ENCODE measurements at regions of chr2 and their contacts with region 1.

Region 1: GRCh38 chr2:172710584-172711024 is 25.0 kb upstream of the RAPGEF4 start:
- DNase-seq: peak; percentile 95
- ATAC-seq: peak; percentile 95
- H3K4me3 ChIP-seq: no peak overlapping the region
- H3K27ac ChIP-seq: no peak overlapping the region
- H3K4me1 ChIP-seq: peaks cover 2% of the 10 kb centered on the region
- H3K27me3 ChIP-seq: no peaks in the 10 kb centered on the region
- CTCF ChIP-seq: peak; percentile 47
- POLR2A ChIP-seq: no peak
- RAD21 ChIP-seq: peak; percentile 70

Region 2: GRCh38 chr2:172588931-172589330 is 121.7 kb before region 1 on chr2:
- CTCF ChIA-PET with region 1: no interaction called
- POLR2A ChIA-PET with region 1: no interaction called
- dilution Hi-C with region 1: no loop called
- in situ Hi-C with region 1: no loop called
- intact Hi-C with region 1: loop called (anchors 2 kb)
- DNase-seq: peak; percentile 61
- ATAC-seq: no peak
- H3K4me3 ChIP-seq: no peak overlapping the region
- H3K27ac ChIP-seq: no peak overlapping the region
- H3K4me1 ChIP-seq: peaks cover 5% of the 10 kb centered on the region; the same call in 1 of the 2 replicates
- H3K27me3 ChIP-seq: no peaks in the 10 kb centered on the region
- CTCF ChIP-seq: no peak
- POLR2A ChIP-seq: no peak
- RAD21 ChIP-seq: no peak

Region 3: GRCh38 chr2:172596776-172597175 is 113.8 kb before region 1 on chr2:
- CTCF ChIA-PET with region 1: interaction called, 3 read pairs
- POLR2A ChIA-PET with region 1: no interaction called
- dilution Hi-C with region 1: no loop called
- in situ Hi-C with region 1: loop called (anchors 5 kb)
- intact Hi-C with region 1: loop called (anchors 2 kb)
- DNase-seq: no peak
- ATAC-seq: no peak
- H3K4me3 ChIP-seq: no peak overlapping the region
- H3K27ac ChIP-seq: no peak overlapping the region
- H3K4me1 ChIP-seq: peaks cover 7% of the 10 kb centered on the region
- H3K27me3 ChIP-seq: no peaks in the 10 kb centered on the region
- CTCF ChIP-seq: no peak
- POLR2A ChIP-seq: no peak
- RAD21 ChIP-seq: no peak

Region 4: GRCh38 chr2:172606285-172606684 is 104.3 kb before region 1 on chr2:
- CTCF ChIA-PET with region 1: no interaction called
- POLR2A ChIA-PET with region 1: no interaction called
- dilution Hi-C with region 1: no loop called
- in situ Hi-C with region 1: loop called (anchors 5 kb)
- intact Hi-C with region 1: loop called (anchors 5 kb)
- DNase-seq: peak; percentile 54
- ATAC-seq: no peak; the same call in 1 of the 2 replicates
- H3K4me3 ChIP-seq: no peak overlapping the region
- H3K27ac ChIP-seq: no peak overlapping the region
- H3K4me1 ChIP-seq: peaks cover 8% of the 10 kb centered on the region
- H3K27me3 ChIP-seq: no peaks in the 10 kb centered on the region
- CTCF ChIP-seq: no peak
- POLR2A ChIP-seq: no peak
- RAD21 ChIP-seq: no peak

Region 5: DNA sequence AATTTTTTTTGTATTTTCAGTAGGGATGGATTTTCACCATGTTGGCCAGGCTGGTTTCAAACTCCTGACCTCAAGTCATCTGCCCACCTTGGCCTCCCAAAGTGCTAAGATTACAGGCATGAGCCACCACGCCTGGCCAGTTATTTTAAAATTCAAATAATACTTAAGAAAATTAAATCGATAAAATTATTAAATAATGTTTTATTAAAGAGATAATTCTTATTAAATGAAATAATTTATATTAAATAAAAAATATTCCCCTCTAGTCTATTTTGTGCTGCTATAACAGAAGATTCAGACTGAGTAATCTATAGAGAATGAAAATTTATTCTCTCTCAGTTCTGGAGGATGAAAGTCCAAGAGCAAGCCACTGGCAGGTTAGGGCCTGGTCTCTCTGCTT is 93.5 kb before region 1 on chr2:
- CTCF ChIA-PET with region 1: no interaction called
- POLR2A ChIA-PET with region 1: no interaction called
- dilution Hi-C with region 1: no loop called
- in situ Hi-C with region 1: no loop called
- intact Hi-C with region 1: no loop called
- DNase-seq: no peak
- ATAC-seq: no peak
- H3K4me3 ChIP-seq: no peak overlapping the region
- H3K27ac ChIP-seq: no peak overlapping the region
- H3K4me1 ChIP-seq: peaks cover 11% of the 10 kb centered on the region; the same call in 1 of the 2 replicates
- H3K27me3 ChIP-seq: no peaks in the 10 kb centered on the region
- CTCF ChIP-seq: no peak
- POLR2A ChIP-seq: no peak
- RAD21 ChIP-seq: no peak

Region 6: DNA sequence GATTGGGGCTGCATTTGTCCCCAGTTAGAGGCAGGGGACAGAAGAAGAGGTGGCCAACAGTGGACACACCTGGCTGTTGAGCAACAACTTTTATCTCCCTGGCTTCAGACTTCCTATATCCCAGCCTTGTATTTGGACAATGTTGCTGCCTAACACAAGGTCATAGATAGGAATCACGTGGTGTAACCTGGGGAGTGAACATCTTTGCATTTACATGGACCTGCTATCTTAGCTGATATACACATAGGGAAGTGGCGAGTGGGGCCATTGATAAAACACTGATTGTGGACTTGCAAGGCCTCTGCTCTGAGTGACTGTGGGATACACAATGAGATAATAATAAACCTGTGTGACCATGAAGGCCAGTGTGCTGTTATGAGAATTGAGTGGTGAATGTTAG is 52.0 kb after region 1 on chr2:
- CTCF ChIA-PET with region 1: no interaction called
- POLR2A ChIA-PET with region 1: no interaction called
- dilution Hi-C with region 1: no loop called
- in situ Hi-C with region 1: no loop called
- intact Hi-C with region 1: no loop called
- DNase-seq: no peak
- ATAC-seq: no peak
- H3K4me3 ChIP-seq: no peak overlapping the region
- H3K27ac ChIP-seq: no peak overlapping the region
- H3K4me1 ChIP-seq: no peaks in the 10 kb centered on the region
- H3K27me3 ChIP-seq: no peaks in the 10 kb centered on the region
- CTCF ChIP-seq: no peak
- POLR2A ChIP-seq: no peak
- RAD21 ChIP-seq: no peak

Region 7: GRCh38 chr2:172783091-172783898 is 72.7 kb after region 1 on chr2:
- CTCF ChIA-PET with region 1: no interaction called
- POLR2A ChIA-PET with region 1: no interaction called
- dilution Hi-C with region 1: no loop called
- in situ Hi-C with region 1: no loop called
- intact Hi-C with region 1: loop called (anchors 5 kb)
- DNase-seq: peak; percentile 94
- ATAC-seq: peak; percentile 89
- H3K4me3 ChIP-seq: no peak overlapping the region
- H3K27ac ChIP-seq: peak overlapping the region; percentile 44
- H3K4me1 ChIP-seq: peaks cover 14% of the 10 kb centered on the region
- H3K27me3 ChIP-seq: no peaks in the 10 kb centered on the region
- CTCF ChIP-seq: peak; percentile 22; the same call in 1 of the 2 replicates
- POLR2A ChIP-seq: no peak
- RAD21 ChIP-seq: no peak

Region 8: DNA sequence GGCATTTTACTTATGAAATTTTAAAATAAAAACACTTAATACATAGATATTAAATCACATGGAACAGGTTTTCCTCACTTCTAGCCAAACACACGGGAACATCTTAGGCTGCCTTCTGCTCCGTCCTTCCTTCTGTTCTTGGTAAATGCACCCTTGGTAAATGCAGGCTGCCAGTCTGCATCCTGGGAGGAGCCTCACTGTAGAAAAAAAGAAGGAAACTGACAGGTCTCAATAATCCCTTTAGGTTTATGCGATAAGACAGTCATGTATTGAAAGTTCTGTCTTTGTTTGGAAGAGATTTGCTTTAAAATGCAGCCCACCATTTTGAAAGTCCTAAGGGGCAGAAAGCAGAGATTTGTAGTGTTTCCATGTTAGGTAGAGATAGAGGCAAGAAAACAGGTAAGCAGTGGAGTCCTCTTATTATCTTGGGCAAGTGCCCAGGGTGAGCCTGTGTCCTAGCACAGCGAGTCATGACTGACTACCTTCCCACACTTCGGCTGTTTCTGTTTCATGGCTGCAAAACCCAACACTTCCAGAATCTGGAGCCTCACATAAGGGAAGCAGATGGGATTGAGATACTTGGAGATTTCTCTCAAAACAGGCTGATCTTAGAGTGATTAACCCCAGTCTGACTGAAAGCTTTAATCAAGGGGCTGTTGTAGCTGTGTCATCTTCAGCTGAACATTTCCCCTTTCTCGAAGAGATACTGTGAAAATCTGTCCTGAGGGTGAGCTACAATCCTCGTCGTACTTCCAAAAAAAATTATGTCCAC is 233.6 kb after region 1 on chr2:
- CTCF ChIA-PET with region 1: no interaction called
- POLR2A ChIA-PET with region 1: no interaction called
- dilution Hi-C with region 1: no loop called
- in situ Hi-C with region 1: no loop called
- intact Hi-C with region 1: loop called (anchors 10 kb)
- DNase-seq: peak; percentile 80
- ATAC-seq: no peak
- H3K4me3 ChIP-seq: no peak overlapping the region
- H3K27ac ChIP-seq: no peak overlapping the region
- H3K4me1 ChIP-seq: peaks cover 9% of the 10 kb centered on the region
- H3K27me3 ChIP-seq: no peaks in the 10 kb centered on the region
- CTCF ChIP-seq: no peak
- POLR2A ChIP-seq: no peak
- RAD21 ChIP-seq: no peak

Measured in IMR-90 (cell line).